PC-9 (cell line): ENCODE measurements at regions of chr3 and their contacts with region 1.

Region 1: GRCh38 chr3:100334488-100335351 is at the start of gene NIT2:
- DNase-seq: peak; percentile 81 to 87
- H3K4me3 ChIP-seq: peak within 1 kb of the TSS; percentile 68
- H3K27ac ChIP-seq: peak within 1 kb of the TSS; percentile 36
- H3K4me1 ChIP-seq: peaks cover 12% of the 10 kb centered on the region; the same call in 1 of the 2 replicates
- H3K27me3 ChIP-seq: no peaks in the 10 kb centered on the region
- CTCF ChIP-seq: no peak
- total RNA-seq, gene NIT2: 91.0 and 115 TPM in 2 replicates

Region 2: DNA sequence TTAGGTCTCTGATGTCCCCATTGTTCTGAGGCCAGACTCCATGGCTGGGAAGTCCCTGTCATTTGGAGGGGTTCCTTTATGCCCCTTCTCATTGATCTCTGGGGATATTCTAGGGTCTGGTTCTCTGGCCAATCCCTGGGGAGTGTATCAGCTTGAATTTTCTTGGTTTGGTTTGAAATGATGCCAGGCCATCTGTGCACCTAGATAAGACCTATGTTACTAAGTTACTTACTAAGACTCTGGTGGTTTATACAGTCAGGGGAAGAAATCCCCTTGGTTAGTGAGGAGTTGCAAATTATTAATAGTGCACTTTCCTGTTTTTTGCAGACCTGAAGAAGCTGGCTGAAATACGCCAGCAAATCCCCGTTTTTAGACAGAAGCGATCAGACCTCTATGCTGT is 20.1 kb after region 1 on chr3:
- CTCF ChIA-PET with region 1: no interaction called
- POLR2A ChIA-PET with region 1: interaction called, 15 read pairs
- intact Hi-C with region 1: no loop called
- DNase-seq: no peak
- H3K4me3 ChIP-seq: no peak overlapping the region
- H3K27ac ChIP-seq: no peak overlapping the region
- H3K4me1 ChIP-seq: no peaks in the 10 kb centered on the region
- H3K27me3 ChIP-seq: no peaks in the 10 kb centered on the region
- CTCF ChIP-seq: no peak